Right cardiac atrium (tissue), 5 donors: ENCODE measurements at regions of chr9 and their contacts with region 1.

Region 1: DNA sequence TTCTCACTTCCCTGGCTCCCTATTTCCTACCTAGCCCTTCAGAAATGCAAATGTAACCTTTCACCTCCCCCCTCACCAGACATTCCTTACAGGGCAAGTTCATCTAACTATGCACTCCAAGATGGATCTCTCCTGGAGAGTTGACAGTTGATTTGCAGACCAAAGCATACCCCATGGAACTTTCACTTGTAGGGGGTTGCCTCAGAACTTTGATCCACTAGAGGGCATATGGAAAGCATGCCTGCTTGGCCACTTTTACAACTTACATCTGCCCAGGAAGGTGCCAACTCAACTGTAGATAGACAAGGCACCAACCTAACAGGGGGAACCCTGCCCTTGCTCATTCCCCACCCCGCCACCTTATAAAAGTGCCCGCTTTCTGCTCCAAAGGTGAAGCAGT is 187.8 kb downstream of the NXNL2 start:
- DNase-seq: no peak
- ATAC-seq: peak in 1 of 2 donors; percentile 44
- H3K4me3 ChIP-seq: no peak overlapping the region
- H3K27ac ChIP-seq: no peak overlapping the region
- H3K4me1 ChIP-seq: peaks cover 4% of the 10 kb centered on the region
- H3K27me3 ChIP-seq: no peaks in the 10 kb centered on the region

Region 2: GRCh38 chr9:88593537-88594185 is 129.1 kb before region 1 on chr9:
- intact Hi-C with region 1: loop called in 1 of 4 experiments (anchors 10 kb)
- DNase-seq: peak in 2 of 3 donors; percentile 44 to 56
- ATAC-seq: peak; percentile 76 to 80
- H3K4me3 ChIP-seq: no peak overlapping the region
- H3K27ac ChIP-seq: no peak overlapping the region
- H3K4me1 ChIP-seq: no peaks in the 10 kb centered on the region
- H3K27me3 ChIP-seq: no peaks in the 10 kb centered on the region

Region 3: GRCh38 chr9:88781628-88782391 is 59.1 kb after region 1 on chr9:
- intact Hi-C with region 1: loop called in 1 of 4 experiments (anchors 10 kb)
- DNase-seq: peak; percentile 73 to 81 (median 75)
- ATAC-seq: peak; percentile 82 to 83
- H3K4me3 ChIP-seq: no peak overlapping the region
- H3K27ac ChIP-seq: peak overlapping the region; percentile 83
- H3K4me1 ChIP-seq: peaks cover 21% of the 10 kb centered on the region
- H3K27me3 ChIP-seq: no peaks in the 10 kb centered on the region

Region 4: DNA sequence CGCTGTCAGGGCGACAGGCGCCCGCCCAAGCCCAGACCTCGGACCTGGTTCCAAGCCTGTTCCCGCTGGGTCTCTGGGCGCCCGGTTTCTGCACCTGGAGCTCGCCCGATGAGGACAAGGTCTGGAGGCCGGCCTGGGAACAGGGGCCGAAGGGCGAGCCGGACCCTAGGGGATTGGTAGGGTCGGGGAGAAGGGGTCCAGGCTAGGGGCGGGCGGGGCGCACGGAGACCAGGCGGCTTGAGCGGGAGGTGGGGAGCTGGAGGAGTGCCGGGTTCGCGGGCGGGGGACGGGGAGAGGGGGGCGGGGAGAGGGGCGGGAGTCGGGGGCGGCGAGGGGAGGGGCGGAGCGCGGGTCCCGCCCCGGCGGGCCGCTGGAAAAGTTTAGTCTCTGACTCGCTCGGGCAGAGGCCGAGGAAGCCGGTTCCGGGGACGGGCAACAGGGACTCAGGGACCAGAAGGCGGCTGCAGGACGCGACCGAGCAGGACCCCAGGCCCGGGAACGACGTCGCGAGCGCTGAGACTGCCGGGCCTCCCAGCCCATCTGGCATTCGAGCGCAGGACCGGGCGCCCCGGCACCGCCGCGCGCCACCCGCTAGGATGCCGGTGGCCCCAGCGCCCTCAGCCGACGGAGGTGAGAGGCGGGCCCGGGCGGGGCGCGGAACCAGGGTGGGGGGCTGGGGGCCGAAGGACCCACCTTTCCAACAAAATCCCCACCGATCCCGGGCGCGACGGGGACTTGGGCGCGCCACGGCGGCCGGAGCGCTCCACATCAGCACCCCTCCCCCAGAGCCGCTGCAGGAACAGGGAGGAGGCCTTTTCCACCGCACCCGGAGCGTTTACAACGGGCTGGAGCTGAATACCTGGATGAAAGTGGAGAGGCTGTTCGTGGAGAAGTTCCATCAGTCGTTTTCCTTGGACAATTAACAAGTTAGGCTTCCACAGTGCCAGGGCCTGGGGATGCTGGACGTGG is 268.6 kb after region 1 on chr9 and contains the start of gene S1PR3:
- intact Hi-C with region 1: loop called in 1 of 4 experiments (anchors 10 kb)
- DNase-seq: peak; percentile 78 to 89 (median 87)
- ATAC-seq: peak; percentile 86
- H3K4me3 ChIP-seq: peak within 1 kb of the TSS; percentile 83
- H3K27ac ChIP-seq: peak within 1 kb of the TSS; percentile 77
- H3K4me1 ChIP-seq: peaks cover 5% of the 10 kb centered on the region
- H3K27me3 ChIP-seq: no peaks in the 10 kb centered on the region
- total RNA-seq, gene S1PR3: 37.2 to 51.6 (median 38.3) TPM

Region 5: DNA sequence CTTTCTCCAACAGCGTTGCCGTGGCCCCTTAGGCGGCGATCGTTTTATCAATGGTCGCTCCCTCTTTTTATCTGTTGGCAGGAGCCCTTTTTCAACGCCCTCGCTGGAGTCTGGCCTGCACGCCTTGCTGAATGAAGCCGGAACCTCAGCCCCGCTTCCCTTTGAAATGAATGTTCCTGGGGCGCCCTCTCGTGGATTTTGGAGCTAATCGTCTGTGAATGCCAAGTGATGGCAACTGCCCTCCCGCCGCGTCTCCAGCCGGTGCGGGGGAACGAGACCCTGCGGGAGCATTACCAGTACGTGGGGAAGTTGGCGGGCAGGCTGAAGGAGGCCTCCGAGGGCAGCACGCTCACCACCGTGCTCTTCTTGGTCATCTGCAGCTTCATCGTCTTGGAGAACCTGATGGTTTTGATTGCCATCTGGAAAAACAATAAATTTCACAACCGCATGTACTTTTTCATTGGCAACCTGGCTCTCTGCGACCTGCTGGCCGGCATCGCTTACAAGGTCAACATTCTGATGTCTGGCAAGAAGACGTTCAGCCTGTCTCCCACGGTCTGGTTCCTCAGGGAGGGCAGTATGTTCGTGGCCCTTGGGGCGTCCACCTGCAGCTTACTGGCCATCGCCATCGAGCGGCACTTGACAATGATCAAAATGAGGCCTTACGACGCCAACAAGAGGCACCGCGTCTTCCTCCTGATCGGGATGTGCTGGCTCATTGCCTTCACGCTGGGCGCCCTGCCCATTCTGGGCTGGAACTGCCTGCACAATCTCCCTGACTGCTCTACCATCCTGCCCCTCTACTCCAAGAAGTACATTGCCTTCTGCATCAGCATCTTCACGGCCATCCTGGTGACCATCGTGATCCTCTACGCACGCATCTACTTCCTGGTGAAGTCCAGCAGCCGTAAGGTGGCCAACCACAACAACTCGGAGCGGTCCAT is 278.5 kb after region 1 on chr9:
- intact Hi-C with region 1: loop called in 3 of 4 experiments (anchors 5 to 10 kb)
- DNase-seq: peak; percentile 93 to 97 (median 95)
- ATAC-seq: peak; percentile 76 to 79
- H3K4me3 ChIP-seq: no peak overlapping the region
- H3K27ac ChIP-seq: peak overlapping the region; percentile 39
- H3K4me1 ChIP-seq: peaks cover 6% of the 10 kb centered on the region
- H3K27me3 ChIP-seq: no peaks in the 10 kb centered on the region